ENCODE measurements at regions of chr1 and their contacts with region 1.

Region 1: DNA sequence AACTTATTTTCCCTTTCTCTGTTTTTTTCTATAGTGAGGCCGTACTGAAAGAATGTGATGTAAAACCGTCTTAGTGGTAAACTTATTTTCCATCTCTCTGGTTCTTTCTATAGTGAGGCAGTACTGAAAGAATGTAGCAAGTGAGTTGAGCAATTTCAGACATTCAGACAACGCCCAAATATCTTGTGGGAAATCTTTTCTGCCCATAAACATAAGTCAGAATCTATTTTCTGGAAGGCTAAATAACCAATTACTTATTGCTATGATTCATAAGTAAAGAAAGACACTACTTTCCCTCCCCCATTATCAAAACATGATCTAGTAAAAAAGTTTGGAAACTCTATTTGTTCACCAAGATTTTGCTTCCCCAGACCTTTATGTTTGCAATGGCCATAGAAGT is 18.8 kb upstream of the SCCPDH start:
- DNase-seq: no peak
- ATAC-seq: no peak
- H3K4me3 ChIP-seq: no peak overlapping the region
- H3K27ac ChIP-seq: no peak overlapping the region
- H3K4me1 ChIP-seq: no peaks in the 10 kb centered on the region
- H3K27me3 ChIP-seq: no peaks in the 10 kb centered on the region
- CTCF ChIP-seq: no peak

Region 2: DNA sequence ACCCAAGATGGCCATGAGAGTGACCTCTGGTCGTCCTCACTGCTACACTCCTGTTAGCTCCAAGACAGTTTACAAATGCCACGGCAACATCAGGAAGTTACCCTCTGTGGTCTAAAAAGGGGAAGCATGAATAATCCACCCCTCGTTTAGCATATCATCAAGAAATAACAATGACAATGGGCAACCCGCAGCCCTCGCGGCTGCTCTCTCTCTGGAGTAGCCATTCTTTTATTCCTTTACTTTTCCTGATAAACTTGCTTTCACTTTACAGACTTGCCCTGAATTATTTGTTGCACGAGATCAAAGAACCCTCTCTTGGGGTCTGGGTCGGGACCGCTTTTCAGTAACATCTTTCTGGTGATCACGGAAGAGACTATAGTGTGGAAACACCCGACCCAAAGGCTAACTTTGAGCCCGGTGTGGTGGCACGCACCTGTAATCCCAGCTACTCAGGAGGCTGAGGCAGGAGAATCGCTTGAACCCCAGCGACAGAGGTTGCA is 1889.7 kb before region 1 on chr1:
- intact Hi-C with region 1: loop called in 1 of 2 experiments (anchors 10 kb)
- DNase-seq: no peak
- ATAC-seq: peak in 1 of 4 donors; percentile 10
- H3K4me3 ChIP-seq: peak overlapping the region; percentile 11
- H3K27ac ChIP-seq: no peak overlapping the region
- H3K4me1 ChIP-seq: no peaks in the 10 kb centered on the region
- H3K27me3 ChIP-seq: peaks cover 0 to 15% (median 2%) of the 10 kb centered on the region in 3 donors
- CTCF ChIP-seq: no peak

Region 3: DNA sequence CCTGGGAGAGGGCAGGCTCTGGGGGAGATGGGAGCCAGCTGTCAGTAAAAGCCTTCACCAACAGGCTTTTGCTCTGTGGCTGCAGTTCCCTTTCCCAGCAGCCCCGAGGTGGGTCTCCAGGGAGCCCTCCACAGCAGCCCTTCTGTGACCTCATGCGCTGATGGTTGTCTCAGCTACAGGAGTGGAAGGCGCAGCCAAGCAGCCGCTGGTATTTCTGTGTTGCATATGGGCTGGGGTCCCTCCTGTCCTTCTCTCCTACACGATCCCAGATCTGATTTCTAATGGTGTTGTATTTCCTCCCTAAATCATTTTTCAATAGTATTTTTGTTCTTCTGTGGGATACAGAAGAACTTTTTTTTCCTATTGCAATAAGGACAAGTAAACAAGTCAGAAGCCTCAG is 23.5 kb before region 1 on chr1:
- intact Hi-C with region 1: no loop called
- DNase-seq: peak in 1 of 2 donors; percentile 74
- ATAC-seq: no peak
- H3K4me3 ChIP-seq: no peak overlapping the region
- H3K27ac ChIP-seq: peak overlapping the region; percentile 27
- H3K4me1 ChIP-seq: peaks cover 17% of the 10 kb centered on the region
- H3K27me3 ChIP-seq: no peaks in the 10 kb centered on the region
- CTCF ChIP-seq: no peak

Measured in psoas muscle (tissue), 8 donors.